Gastrocnemius medialis (tissue), 4 donors: ENCODE measurements at regions of chr5 and their contacts with region 1.

Region 1: GRCh38 chr5:126369967-126370731 is 53.1 kb upstream of the GRAMD2B start:
- DNase-seq: no peak
- ATAC-seq: no peak
- H3K4me3 ChIP-seq: no peak overlapping the region
- H3K27ac ChIP-seq: no peak overlapping the region
- H3K4me1 ChIP-seq: no peaks in the 10 kb centered on the region
- H3K27me3 ChIP-seq: no peaks in the 10 kb centered on the region
- CTCF ChIP-seq: no peak
- POLR2A ChIP-seq: no peak

Region 2: DNA sequence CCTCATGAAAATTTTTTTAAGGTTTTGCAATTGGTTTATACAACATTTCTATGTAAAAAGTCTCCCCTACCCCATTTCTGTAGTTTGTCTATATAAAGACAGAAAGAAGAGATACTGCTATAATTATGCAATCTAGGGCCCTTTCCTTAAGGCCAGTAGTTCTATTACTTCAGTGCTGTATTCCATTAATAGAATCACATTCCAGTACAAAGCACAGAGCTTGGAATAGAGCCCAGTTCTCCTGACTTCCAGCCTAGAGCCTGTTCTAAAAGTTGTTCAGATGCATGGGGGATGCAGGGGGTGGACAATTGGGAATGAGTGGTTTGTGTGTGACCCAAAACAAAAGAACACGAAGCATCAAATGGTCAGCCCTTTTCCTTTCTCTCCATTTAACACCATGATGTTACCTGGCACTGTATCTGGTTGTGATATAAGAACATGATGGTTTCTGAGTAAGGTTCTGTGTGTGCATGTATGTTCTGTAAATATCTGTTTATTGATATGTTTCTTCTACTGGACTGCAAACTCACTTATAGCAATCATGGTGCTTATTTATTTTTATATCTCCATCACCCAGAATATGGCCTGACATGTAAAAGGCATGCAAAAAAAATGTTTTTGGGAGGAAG is 44.8 kb after region 1 on chr5:
- in situ Hi-C with region 1: no loop called
- intact Hi-C with region 1: loop called (anchors 10 kb)
- DNase-seq: peak; percentile 33 to 35
- ATAC-seq: peak; percentile 100
- H3K4me3 ChIP-seq: no peak overlapping the region
- H3K27ac ChIP-seq: peak overlapping the region; percentile 16 to 73 (median 64)
- H3K4me1 ChIP-seq: peaks cover 15 to 35% of the 10 kb centered on the region in 2 donors
- H3K27me3 ChIP-seq: no peaks in the 10 kb centered on the region
- CTCF ChIP-seq: no peak
- POLR2A ChIP-seq: no peak